Head of caudate nucleus (tissue), 42 donors: ENCODE measurements at regions of chr11 and their contacts with region 1.

Region 1: DNA sequence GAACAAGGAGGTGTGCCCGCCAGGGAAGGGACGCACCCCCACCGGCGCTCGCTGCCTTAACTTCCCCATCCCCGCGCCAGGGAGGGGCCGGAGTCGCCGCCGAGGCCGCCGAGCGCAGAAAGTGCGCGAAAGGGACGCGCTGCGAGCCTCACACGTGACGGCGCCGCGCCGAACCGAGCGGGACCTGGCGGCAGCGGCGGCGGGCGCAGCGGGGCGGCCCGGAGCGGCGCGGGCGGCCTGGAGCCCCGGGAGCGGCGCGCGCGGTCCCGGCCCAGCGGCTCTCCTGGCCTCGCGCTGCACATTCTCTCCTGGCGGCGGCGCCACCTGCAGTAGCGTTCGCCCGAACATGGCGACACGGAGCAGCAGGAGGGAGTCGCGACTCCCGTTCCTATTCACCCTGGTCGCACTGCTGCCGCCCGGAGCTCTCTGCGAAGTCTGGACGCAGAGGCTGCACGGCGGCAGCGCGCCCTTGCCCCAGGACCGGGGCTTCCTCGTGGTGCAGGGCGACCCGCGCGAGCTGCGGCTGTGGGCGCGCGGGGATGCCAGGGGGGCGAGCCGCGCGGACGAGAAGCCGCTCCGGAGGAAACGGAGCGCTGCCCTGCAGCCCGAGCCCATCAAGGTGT is at the start of gene SORL1:
- DNase-seq: peak; percentile 65 to 93 (median 84)

Region 2: DNA sequence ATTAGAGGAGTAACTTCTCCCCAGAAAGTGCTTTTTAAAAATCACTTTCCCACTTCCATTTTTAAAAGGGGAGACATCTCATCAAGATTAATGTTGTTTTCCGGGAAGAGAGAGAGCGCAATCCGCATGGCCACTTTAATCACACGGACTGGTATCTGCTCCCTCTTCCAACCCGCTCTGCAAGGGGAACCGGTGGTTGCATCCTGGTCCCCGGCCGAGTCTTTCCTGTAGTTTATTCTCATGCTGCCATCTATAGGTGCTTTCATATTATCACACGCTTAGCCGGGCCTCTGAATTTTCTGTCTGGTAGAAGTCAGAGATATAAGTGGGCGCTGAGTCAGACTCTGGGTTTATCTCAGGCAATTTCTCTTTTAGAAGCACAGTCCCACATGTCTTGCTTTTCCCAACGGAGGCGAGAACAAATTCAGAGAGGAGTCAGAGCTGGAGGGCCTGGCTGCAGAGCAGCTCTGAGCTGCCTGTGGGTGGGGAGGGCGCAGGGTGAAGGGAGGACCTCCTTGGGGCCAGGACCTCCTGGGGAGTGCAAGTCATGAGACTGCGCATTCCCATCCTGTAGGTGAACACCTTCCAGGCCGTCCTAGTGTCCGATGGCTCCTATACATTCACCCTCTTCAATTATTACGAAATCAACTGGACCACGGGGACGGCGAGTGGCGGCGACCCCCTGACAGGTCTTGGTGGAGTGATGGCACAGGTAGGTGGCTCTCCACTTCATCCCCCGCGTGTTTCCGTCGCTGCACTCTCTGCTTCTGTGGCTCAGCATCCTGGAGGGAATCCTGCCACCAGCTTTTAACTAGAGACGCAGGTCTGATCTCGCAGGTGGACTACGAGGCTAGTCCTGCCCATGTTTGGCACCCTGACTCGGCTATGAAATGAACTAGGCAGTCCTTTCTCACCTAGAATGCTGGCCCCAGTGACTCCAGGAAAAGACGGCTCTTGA is 339.3 kb before region 1 on chr11:
- intact Hi-C with region 1: no loop called
- DNase-seq: peak; percentile 57 to 93 (median 76)

Region 3: DNA sequence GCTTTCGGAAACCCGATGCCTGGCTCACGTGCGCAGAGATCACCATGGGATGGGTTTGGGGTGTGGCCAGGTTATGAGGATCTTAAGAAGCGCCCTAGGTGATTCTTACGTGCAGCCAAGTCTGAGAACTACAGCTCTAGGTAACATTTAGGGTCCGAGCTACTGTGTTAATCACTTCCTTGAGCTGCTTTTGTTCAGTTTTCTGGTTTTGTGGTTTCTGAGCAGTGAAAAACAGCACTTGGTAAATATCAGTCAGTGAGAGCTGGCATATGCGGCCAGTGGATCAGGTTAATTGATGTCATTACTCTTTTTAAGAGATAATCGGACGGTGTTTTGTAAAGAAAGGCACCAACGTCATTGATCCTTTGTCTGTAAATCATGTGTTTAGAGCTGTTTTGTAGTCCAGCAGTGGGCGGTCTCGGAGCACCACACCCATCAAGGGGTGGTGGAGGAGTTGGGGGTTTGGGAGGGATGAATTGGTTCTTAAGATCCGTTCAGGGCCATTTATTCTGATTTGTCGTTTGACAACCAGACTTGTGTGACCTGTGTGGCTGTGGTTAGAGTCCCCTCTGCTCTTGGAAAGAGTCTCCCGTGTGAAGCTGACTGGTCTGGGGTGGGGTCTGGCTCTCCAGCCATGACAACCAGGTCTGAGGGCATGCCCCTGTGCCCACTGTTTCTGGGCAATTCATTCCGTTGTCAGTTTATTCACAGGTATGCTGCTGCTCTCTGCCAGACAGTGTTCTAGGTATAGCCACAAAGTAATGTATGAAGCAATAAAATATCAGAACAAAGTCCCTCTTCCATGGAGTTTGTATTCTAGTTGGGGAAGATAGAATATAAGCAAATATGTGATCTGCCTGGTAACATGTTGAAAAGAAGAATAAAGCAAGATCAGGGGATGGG is 62.6 kb after region 1 on chr11:
- intact Hi-C with region 1: loop called (anchors 10 kb)
- DNase-seq: no peak